MCF 10A (cell line): ENCODE measurements at regions of chr16 and their contacts with region 1.

Region 1: DNA sequence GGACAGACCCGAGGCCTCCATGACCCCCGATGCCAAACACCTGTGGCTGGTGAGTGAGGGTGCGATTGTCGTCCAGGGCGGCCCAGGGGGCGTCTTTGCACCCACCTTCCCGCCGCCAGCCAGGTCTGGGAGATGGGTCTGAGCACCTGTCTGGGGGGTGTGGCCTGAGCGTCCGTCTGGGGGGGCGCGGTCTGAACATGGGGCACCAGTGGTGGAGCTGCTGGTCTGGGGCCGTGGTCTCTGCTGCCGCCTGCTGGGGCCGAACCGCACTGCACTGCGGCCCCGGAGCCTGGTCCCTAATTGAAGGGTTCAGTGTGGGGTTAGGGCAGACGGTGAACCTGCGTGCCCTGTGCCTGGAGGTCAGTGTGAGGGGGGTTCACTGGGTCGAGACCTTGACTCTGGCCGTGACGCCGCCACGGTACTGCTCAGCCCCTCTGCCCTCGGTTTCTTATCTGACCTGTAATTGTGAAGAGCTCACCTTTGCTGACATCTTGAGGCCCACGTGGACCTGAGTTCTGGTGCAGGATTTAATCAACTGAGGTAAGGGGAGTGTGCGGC is 12.6 kb upstream of the TCF25 start:
- DNase-seq: peak; percentile 61
- H3K4me3 Mint-ChIP-seq: no peak overlapping the region
- H3K27ac Mint-ChIP-seq: no peak overlapping the region
- H3K4me1 Mint-ChIP-seq: peaks cover 27% of the 10 kb centered on the region
- H3K27me3 Mint-ChIP-seq: no peaks in the 10 kb centered on the region
- CTCF ChIP-seq: peak; percentile 98

Region 2: GRCh38 chr16:89657442-89658220 is 203.2 kb before region 1 on chr16 and contains the starts of genes CHMP1A and SPATA33:
- CTCF ChIA-PET with region 1: no interaction called
- POLR2A ChIA-PET with region 1: no interaction called
- intact Hi-C with region 1: no loop called
- DNase-seq: peak; percentile 84
- H3K4me3 Mint-ChIP-seq: peak within 1 kb of the TSS; percentile 89
- H3K27ac Mint-ChIP-seq: peak within 1 kb of the TSS; percentile 85
- H3K4me1 Mint-ChIP-seq: peaks cover 7% of the 10 kb centered on the region
- H3K27me3 Mint-ChIP-seq: no peaks in the 10 kb centered on the region
- CTCF ChIP-seq: no peak
- total RNA-seq, gene CHMP1A: 59.7 and 62.4 TPM in 2 replicates
- total RNA-seq, gene SPATA33: 7.2 and 9.5 TPM in 2 replicates

Region 3: DNA sequence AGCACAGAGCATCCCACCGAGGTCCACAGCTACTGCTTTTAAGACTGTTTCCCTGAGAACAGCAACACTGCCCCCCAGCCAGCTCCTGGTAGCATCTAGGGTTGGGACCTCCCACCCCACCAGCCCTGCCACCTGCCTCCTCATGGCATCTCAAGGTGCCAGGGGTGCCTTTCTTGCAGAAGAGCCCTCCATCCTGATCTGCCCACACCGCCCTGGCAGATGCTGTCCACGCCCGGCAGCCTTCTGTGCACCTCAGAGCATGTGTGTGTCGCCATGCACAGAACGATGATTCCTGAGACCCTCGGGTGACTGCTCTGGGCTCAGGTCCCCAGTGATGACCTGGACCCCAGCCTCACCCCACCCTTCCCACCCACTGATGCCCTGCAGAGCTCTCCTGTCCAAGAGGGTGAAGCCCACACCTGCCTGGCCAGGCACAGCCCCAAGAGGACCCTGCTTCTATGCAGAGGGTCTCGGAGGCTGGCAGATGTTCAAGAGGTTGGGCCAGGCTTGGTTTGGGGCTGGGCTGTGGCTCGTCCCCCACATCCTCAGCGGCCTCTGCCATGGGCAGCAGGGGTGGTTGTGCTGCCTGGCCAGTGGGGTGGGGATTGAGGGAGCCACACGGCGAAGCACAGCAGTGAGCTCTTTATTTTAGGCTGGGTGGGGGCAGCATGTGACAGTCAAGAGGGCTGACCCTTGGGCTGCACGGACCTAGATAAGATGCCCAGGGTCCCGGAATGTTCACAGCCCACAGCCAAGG is 154.1 kb before region 1 on chr16:
- CTCF ChIA-PET with region 1: interaction called, 56 read pairs
- POLR2A ChIA-PET with region 1: no interaction called
- intact Hi-C with region 1: no loop called
- DNase-seq: no peak
- H3K4me3 Mint-ChIP-seq: no peak overlapping the region
- H3K27ac Mint-ChIP-seq: no peak overlapping the region
- H3K4me1 Mint-ChIP-seq: no peaks in the 10 kb centered on the region
- H3K27me3 Mint-ChIP-seq: no peaks in the 10 kb centered on the region
- CTCF ChIP-seq: no peak

Region 4: GRCh38 chr16:89815639-89816348 is 45.0 kb before region 1 on chr16:
- CTCF ChIA-PET with region 1: interaction called, 12 read pairs
- POLR2A ChIA-PET with region 1: no interaction called
- intact Hi-C with region 1: loop called (anchors 1 kb)
- DNase-seq: no peak
- H3K4me3 Mint-ChIP-seq: peak overlapping the region; percentile 76
- H3K27ac Mint-ChIP-seq: no peak overlapping the region
- H3K4me1 Mint-ChIP-seq: no peaks in the 10 kb centered on the region
- H3K27me3 Mint-ChIP-seq: no peaks in the 10 kb centered on the region
- CTCF ChIP-seq: no peak

Region 5: DNA sequence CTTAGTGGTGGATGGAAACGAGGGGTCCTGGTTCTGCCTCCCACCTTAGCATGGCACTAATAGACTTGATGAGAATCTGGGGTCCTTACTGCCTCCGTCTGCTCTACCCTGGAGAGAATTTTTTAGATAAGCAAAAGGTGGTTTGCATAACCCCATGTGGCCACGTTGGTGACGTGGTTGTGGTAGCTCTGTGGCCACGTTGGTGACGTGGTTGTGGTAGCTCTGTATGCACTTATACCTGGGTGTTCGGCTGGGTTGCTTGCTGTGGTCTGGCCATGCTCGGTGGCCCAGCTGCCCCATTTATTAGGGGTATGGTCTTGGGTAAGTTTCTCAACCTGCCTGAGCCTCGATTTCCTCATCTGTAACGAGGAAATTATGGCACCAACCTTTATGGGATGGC is 19.6 kb before region 1 on chr16:
- CTCF ChIA-PET with region 1: interaction called, 11 read pairs
- POLR2A ChIA-PET with region 1: interaction called, 5 read pairs
- intact Hi-C with region 1: no loop called
- DNase-seq: no peak
- H3K4me3 Mint-ChIP-seq: no peak overlapping the region
- H3K27ac Mint-ChIP-seq: no peak overlapping the region
- H3K4me1 Mint-ChIP-seq: no peaks in the 10 kb centered on the region
- H3K27me3 Mint-ChIP-seq: no peaks in the 10 kb centered on the region
- CTCF ChIP-seq: no peak

Region 6: GRCh38 chr16:89964201-89964600 is 103.4 kb after region 1 on chr16:
- CTCF ChIA-PET with region 1: no interaction called
- POLR2A ChIA-PET with region 1: no interaction called
- intact Hi-C with region 1: no loop called
- DNase-seq: no peak
- H3K4me3 Mint-ChIP-seq: no peak overlapping the region
- H3K27ac Mint-ChIP-seq: no peak overlapping the region
- H3K4me1 Mint-ChIP-seq: no peaks in the 10 kb centered on the region
- H3K27me3 Mint-ChIP-seq: no peaks in the 10 kb centered on the region
- CTCF ChIP-seq: no peak